ENCODE measurements at regions of chr13 and their contacts with region 1.

Region 1: GRCh38 chr13:20713751-20714150 is 10.3 kb downstream of the IL17D start:
- DNase-seq: no peak
- H3K4me3 Mint-ChIP-seq: no peak overlapping the region
- H3K27ac Mint-ChIP-seq: no peak overlapping the region
- H3K4me1 Mint-ChIP-seq: peaks cover 18% of the 10 kb centered on the region
- H3K27me3 Mint-ChIP-seq: peaks cover 23% of the 10 kb centered on the region
- CTCF ChIP-seq: no peak

Region 2: GRCh38 chr13:20495082-20496023 is 218.4 kb before region 1 on chr13:
- CTCF ChIA-PET with region 1: no interaction called
- intact Hi-C with region 1: loop called (anchors 5 kb)
- DNase-seq: peak; percentile 46
- H3K4me3 Mint-ChIP-seq: no peak overlapping the region
- H3K27ac Mint-ChIP-seq: peak overlapping the region; percentile 25
- H3K4me1 Mint-ChIP-seq: no peaks in the 10 kb centered on the region
- H3K27me3 Mint-ChIP-seq: no peaks in the 10 kb centered on the region
- CTCF ChIP-seq: peak; percentile 55

Region 3: GRCh38 chr13:20828539-20829364 is 115.0 kb after region 1 on chr13:
- CTCF ChIA-PET with region 1: no interaction called
- intact Hi-C with region 1: loop called (anchors 2 kb)
- DNase-seq: peak; percentile 33
- H3K4me3 Mint-ChIP-seq: no peak overlapping the region
- H3K27ac Mint-ChIP-seq: no peak overlapping the region
- H3K4me1 Mint-ChIP-seq: no peaks in the 10 kb centered on the region
- H3K27me3 Mint-ChIP-seq: no peaks in the 10 kb centered on the region
- CTCF ChIP-seq: peak; percentile 40

Measured in Calu3 (cell line).